Dorsolateral prefrontal cortex (tissue), 120 donors: ENCODE measurements at regions of chr12 and their contacts with region 1.

Region 1: GRCh38 chr12:122090759-122091515 is 12.4 kb downstream of the MLXIP start:
- DNase-seq: no peak
- H3K4me3 ChIP-seq: no peak overlapping the region
- H3K27ac ChIP-seq: peak overlapping the region in 27 of 59 donors; percentile 0 to 65 (median 24)
- H3K27me3 ChIP-seq: no peaks in the 10 kb centered on the region
- CTCF ChIP-seq: no peak

Region 2: DNA sequence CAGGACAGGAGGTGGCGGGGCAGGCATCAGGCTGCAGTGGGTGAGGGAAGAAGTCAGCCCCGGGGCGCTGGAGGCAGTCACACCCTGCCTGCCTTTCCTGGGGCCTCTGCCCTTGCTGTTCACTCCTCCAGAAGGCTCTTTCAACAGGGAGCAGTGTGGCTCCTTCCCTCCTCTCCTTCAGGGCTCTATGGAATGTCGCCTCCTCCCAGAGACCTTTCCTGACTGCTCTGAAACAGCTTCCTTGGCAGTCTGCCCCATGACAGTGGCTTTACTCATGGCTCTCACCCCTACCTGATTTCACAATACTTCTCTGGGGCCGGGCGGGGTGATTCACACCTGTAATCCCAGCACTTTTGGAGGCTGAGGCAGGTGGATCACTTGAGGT is 304.5 kb before region 1 on chr12:
- intact Hi-C with region 1: no loop called
- DNase-seq: no peak
- H3K4me3 ChIP-seq: no peak overlapping the region
- H3K27ac ChIP-seq: no peak overlapping the region
- H3K27me3 ChIP-seq: no peaks in the 10 kb centered on the region
- CTCF ChIP-seq: no peak

Region 3: DNA sequence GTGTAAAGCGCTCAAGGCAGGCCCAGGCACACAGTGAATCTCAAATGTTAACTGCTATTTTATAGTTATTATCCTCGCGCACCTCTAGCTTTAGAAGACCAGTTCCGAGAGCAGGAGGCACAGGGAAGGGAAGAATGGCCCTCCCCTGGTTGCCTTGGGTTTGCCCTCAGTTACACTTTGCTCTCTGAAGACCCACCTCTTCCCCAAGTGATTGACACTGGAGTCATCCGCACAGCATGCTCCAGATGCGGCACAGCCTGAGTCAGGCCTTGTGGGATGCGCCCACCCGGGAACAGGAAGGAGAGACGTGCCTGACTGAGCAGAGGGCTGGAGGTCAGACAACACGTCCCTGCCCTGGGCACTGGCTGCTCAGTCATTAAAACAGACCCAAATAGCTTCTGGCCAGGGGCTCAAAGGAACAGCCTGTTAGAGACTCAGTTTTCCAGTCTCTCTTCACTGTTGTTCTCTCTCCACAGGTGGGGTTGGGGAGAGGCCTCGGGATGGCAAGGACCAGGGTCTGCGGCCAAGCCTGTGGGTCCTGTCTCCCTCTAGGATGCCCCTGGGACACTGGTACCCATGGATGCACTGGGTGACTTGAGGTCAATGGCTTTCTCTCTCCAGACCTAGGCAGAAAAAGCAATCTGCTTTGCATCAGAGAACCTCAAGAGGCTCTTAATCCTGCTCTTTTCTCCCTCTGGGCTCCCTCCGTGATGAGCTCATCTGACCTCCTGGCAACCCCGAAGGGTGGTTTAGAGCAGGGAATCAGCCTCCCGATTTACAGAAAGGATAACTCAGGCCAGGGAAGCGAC is 26.0 kb before region 1 on chr12:
- intact Hi-C with region 1: loop called in 1 of 2 experiments (anchors 1 kb)
- DNase-seq: no peak
- H3K4me3 ChIP-seq: peak overlapping the region in 2 of 59 donors; percentile 21 to 26
- H3K27ac ChIP-seq: peak overlapping the region in 40 of 59 donors; percentile 3 to 91 (median 80)
- H3K27me3 ChIP-seq: no peaks in the 10 kb centered on the region
- CTCF ChIP-seq: no peak